ENCODE measurements at regions of chr12 and their contacts with region 1.

Region 1: DNA sequence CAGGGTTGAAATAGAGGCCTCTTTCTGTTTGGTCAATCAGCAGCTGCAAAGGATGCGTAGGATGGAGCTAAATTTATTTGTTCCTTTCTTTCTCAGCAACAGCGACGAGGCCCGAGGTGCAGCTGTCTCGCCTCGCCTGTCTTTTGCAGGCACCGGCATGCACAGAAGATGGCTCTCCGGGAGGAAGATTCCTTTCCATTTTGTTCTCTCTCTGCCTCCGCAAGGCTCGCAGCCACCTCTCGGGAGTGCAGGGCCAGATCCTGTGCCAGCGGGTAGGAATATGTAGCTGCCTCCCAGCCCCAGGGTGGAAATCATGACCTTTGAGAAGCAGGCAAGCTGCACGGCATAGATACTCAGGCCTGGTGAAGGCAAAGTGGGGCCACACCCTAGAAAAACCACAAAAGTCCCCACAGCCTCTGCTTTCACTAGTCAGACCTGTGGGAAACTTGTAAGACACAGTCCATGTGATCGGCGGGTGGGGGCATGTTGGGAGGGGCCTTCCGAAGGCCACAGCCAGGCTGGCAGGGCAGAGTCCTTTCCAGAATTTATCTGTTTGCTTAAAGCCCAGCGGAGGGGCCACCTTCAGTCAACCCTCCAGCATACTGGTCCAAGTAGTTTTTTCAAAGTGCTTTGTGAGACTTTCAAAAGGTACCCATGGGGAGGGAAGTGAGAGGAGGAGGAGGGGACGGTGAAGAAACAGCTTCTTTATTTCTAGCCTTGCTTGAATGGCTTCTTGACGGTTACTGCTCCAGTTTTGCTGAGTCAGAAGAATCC is at the start of gene MAP1LC3B2:
- DNase-seq: peak; percentile 96
- ATAC-seq: peak; percentile 79
- H3K4me3 ChIP-seq: peak within 1 kb of the TSS; percentile 38 to 67 (median 45)
- H3K4me3 Mint-ChIP-seq: peak within 1 kb of the TSS; percentile 91
- H3K27ac ChIP-seq: peak within 1 kb of the TSS; percentile 95 to 99
- H3K27ac Mint-ChIP-seq: peak within 1 kb of the TSS; percentile 100
- H3K4me1 ChIP-seq: peaks cover 42 to 54% of the 10 kb centered on the region in 2 donors
- H3K4me1 Mint-ChIP-seq: peaks cover 48% of the 10 kb centered on the region
- H3K27me3 ChIP-seq: no peaks in the 10 kb centered on the region
- H3K27me3 Mint-ChIP-seq: no peaks in the 10 kb centered on the region
- CTCF ChIP-seq: no peak
- total RNA-seq, gene MAP1LC3B2: 1.0 TPM in 1 of 2 replicates, not detected in the other

Region 2: GRCh38 chr12:116267948-116268347 is 291.4 kb before region 1 on chr12:
- CTCF ChIA-PET with region 1: no interaction called
- POLR2A ChIA-PET with region 1: no interaction called
- intact Hi-C with region 1: no loop called
- DNase-seq: no peak
- ATAC-seq: no peak
- H3K4me3 ChIP-seq: no peak overlapping the region
- H3K4me3 Mint-ChIP-seq: no peak overlapping the region
- H3K27ac ChIP-seq: no peak overlapping the region
- H3K27ac Mint-ChIP-seq: no peak overlapping the region
- H3K4me1 ChIP-seq: peaks cover 45 to 64% of the 10 kb centered on the region in 2 donors
- H3K4me1 Mint-ChIP-seq: peaks cover 31% of the 10 kb centered on the region
- H3K27me3 ChIP-seq: no peaks in the 10 kb centered on the region
- H3K27me3 Mint-ChIP-seq: no peaks in the 10 kb centered on the region
- CTCF ChIP-seq: no peak

Region 3: DNA sequence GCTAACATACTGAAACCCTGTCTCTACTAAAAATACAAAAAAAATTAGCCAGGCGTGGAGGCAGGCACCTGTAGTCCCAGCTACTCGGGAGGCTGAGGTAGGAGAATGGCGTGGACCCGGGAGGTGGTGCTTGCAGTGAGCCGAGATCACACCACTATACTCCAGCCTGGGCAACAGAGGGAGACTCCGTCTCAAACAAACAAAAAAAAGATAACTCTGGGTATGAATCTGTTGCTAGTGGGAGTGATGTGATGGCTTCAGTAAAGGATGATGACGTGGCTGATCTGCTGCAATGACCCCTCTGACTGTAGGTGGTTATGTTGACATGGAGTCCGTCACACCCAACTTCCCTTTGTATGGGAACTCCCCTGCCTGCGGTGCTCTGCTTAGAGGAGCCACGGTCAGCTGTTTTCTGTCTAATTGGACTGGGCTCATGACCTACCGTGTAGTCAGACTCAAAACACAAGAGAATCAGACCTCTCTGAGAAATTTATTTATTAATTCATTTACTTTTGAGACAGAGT is 222.7 kb before region 1 on chr12:
- CTCF ChIA-PET with region 1: interaction called, 6 read pairs
- POLR2A ChIA-PET with region 1: interaction called, 11 read pairs
- intact Hi-C with region 1: loop called (anchors 1 kb)
- DNase-seq: peak; percentile 94
- ATAC-seq: peak; percentile 90
- H3K4me3 ChIP-seq: peak overlapping the region in 2 of 5 experiments; percentile 18 to 35
- H3K4me3 Mint-ChIP-seq: peak overlapping the region; percentile 78
- H3K27ac ChIP-seq: peak overlapping the region; percentile 55 to 78
- H3K27ac Mint-ChIP-seq: peak overlapping the region; percentile 89
- H3K4me1 ChIP-seq: peaks cover 56 to 84% of the 10 kb centered on the region in 2 donors
- H3K4me1 Mint-ChIP-seq: peaks cover 70% of the 10 kb centered on the region
- H3K27me3 ChIP-seq: no peaks in the 10 kb centered on the region
- H3K27me3 Mint-ChIP-seq: no peaks in the 10 kb centered on the region
- CTCF ChIP-seq: peak; percentile 15

Region 4: GRCh38 chr12:116533343-116534251 is 25.8 kb before region 1 on chr12:
- CTCF ChIA-PET with region 1: interaction called, 11 read pairs
- POLR2A ChIA-PET with region 1: interaction called, 21 read pairs
- intact Hi-C with region 1: loop called (anchors 1 kb)
- DNase-seq: peak; percentile 85
- ATAC-seq: peak; percentile 93
- H3K4me3 ChIP-seq: peak overlapping the region; percentile 53 to 96 (median 67)
- H3K4me3 Mint-ChIP-seq: peak overlapping the region; percentile 85
- H3K27ac ChIP-seq: no peak overlapping the region
- H3K27ac Mint-ChIP-seq: peak overlapping the region; percentile 90
- H3K4me1 ChIP-seq: peaks cover 37 to 43% of the 10 kb centered on the region in 2 donors
- H3K4me1 Mint-ChIP-seq: peaks cover 52% of the 10 kb centered on the region
- H3K27me3 ChIP-seq: no peaks in the 10 kb centered on the region
- H3K27me3 Mint-ChIP-seq: no peaks in the 10 kb centered on the region
- CTCF ChIP-seq: no peak

Region 5: GRCh38 chr12:116591855-116592637 is 32.7 kb after region 1 on chr12:
- CTCF ChIA-PET with region 1: interaction called, 6 read pairs
- POLR2A ChIA-PET with region 1: interaction called, 4 read pairs
- intact Hi-C with region 1: loop called (anchors 1 kb)
- DNase-seq: no peak
- ATAC-seq: no peak
- H3K4me3 ChIP-seq: no peak overlapping the region
- H3K4me3 Mint-ChIP-seq: no peak overlapping the region
- H3K27ac ChIP-seq: peak overlapping the region; percentile 40 to 71
- H3K27ac Mint-ChIP-seq: peak overlapping the region; percentile 65
- H3K4me1 ChIP-seq: peaks cover 30 to 39% of the 10 kb centered on the region in 2 donors
- H3K4me1 Mint-ChIP-seq: peaks cover 43% of the 10 kb centered on the region
- H3K27me3 ChIP-seq: no peaks in the 10 kb centered on the region
- H3K27me3 Mint-ChIP-seq: no peaks in the 10 kb centered on the region
- CTCF ChIP-seq: no peak